Panc1 (cell line): ENCODE measurements at regions of chr7 and their contacts with region 1.

Region 1: DNA sequence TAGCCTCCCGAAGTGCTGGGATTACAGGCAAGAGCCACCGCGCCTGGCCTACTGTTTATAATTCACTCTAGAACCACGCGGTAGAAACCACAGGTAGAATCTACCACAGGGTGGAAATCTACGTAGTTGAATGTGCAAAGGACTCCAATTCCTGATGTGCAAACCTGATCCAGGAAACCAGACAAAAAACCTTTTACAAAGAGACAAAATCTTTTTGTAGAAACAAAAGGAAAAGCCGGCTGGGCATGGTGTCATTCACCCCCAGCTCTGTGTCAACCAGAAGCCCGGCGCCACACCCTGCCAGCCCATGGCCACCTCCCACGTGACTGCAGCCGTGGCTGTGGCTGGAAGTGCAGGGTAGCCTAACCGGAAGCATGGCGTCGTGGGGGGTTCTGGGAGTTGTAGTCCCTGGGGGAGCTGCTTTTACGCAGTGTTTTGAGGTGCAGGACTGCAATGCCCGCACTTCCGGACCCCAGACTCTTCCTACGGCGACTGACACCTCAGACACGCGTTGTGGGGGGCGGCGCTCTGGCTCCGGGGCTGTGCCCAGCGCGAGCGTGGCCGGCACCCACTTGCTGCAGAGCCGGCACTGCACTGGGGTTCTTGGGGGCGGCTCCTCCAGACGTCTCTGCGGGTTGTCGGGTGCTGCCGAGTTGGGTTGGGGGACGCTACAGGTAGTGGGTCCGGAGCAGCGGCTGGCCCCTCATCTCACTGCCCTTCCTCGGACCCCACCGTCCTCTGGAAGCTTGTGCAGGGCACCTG is 41.5 kb upstream of the RNF216 start:
- DNase-seq: peak; percentile 90
- ATAC-seq: peak; percentile 100
- H3K4me3 ChIP-seq: peak overlapping the region; percentile 59 to 73
- H3K27ac ChIP-seq: peak overlapping the region; percentile 93
- H3K4me1 ChIP-seq: no peaks in the 10 kb centered on the region
- H3K27me3 ChIP-seq: no peaks in the 10 kb centered on the region
- CTCF ChIP-seq: no peak

Region 2: GRCh38 chr7:5677538-5678294 is 145.2 kb before region 1 on chr7:
- CTCF ChIA-PET with region 1: no interaction called
- POLR2A ChIA-PET with region 1: no interaction called
- in situ Hi-C with region 1: loop called (anchors 25 kb)
- intact Hi-C with region 1: no loop called
- DNase-seq: no peak
- ATAC-seq: peak; percentile 74
- H3K4me3 ChIP-seq: no peak overlapping the region
- H3K27ac ChIP-seq: no peak overlapping the region
- H3K4me1 ChIP-seq: 0 out of 2 replicates have a peak, but pooled peaks cover 3% of the 10 kb centered on the region
- H3K27me3 ChIP-seq: no peaks in the 10 kb centered on the region
- CTCF ChIP-seq: no peak; the same call in 1 of the 2 replicates

Region 3: GRCh38 chr7:5997222-5997808 is 174.4 kb after region 1 on chr7:
- CTCF ChIA-PET with region 1: no interaction called
- POLR2A ChIA-PET with region 1: interaction called, 14 read pairs
- in situ Hi-C with region 1: no loop called
- intact Hi-C with region 1: no loop called
- DNase-seq: no peak
- ATAC-seq: peak; percentile 85
- H3K4me3 ChIP-seq: no peak overlapping the region
- H3K27ac ChIP-seq: no peak overlapping the region
- H3K4me1 ChIP-seq: peaks cover 5% of the 10 kb centered on the region
- H3K27me3 ChIP-seq: no peaks in the 10 kb centered on the region
- CTCF ChIP-seq: no peak; the same call in 1 of the 2 replicates